ENCODE measurements at regions of chr14 and their contacts with region 1.

Region 1: DNA sequence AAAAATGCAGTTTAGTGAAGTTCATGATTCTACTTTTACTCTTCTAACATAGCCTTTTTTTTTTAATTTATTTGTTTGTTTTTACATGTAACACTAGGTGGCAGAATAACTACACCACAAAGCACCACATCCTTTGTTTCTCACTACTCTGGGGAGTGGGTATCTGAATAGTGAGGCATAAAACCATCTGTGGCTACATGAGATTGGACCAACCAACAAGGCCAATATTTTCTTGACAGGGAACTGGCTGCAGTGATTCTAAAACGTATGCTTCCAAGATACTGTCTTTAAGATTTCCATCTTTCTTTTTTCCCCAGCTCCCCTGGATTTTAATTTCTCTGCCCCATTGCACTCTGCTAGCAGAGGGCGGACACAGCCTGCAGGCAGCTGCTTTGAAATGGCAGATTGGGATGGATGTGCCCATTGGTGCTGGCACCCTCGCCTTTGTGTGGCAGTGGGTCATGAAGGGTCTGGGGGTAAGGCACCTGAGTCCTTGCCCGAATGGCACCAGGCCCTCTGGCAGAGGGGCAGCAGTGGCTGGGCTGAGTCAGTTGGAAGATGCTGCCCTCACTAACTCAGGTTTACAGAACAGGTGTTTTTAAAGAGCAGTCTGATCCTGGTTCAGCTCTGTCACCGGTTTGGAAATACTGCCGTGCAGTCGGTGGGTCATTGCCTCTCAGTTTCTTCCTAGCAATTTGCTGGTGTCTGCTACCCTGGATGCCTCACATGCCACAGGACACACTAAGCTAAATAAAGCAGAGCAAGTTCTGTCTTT is 429.1 kb downstream of the RAD51B start:
- DNase-seq: peak; percentile 33 to 48
- H3K4me3 ChIP-seq: no peak overlapping the region
- H3K27ac ChIP-seq: peak overlapping the region; percentile 93
- H3K4me1 ChIP-seq: peaks cover 66% of the 10 kb centered on the region
- H3K27me3 ChIP-seq: no peaks in the 10 kb centered on the region
- CTCF ChIP-seq: peak; percentile 90

Region 2: GRCh38 chr14:67943947-67944346 is 304.7 kb before region 1 on chr14:
- CTCF ChIA-PET with region 1: interaction called, 6 read pairs
- POLR2A ChIA-PET with region 1: no interaction called
- intact Hi-C with region 1: loop called (anchors 1 kb)
- DNase-seq: peak; percentile 54 to 67
- H3K4me3 ChIP-seq: no peak overlapping the region
- H3K27ac ChIP-seq: peak overlapping the region; percentile 37
- H3K4me1 ChIP-seq: peaks cover 43% of the 10 kb centered on the region
- H3K27me3 ChIP-seq: no peaks in the 10 kb centered on the region
- CTCF ChIP-seq: peak; percentile 91

Region 3: GRCh38 chr14:68268719-68269118 is 20.1 kb after region 1 on chr14:
- CTCF ChIA-PET with region 1: no interaction called
- POLR2A ChIA-PET with region 1: no interaction called
- intact Hi-C with region 1: no loop called
- DNase-seq: no peak
- H3K4me3 ChIP-seq: no peak overlapping the region
- H3K27ac ChIP-seq: no peak overlapping the region
- H3K4me1 ChIP-seq: no peaks in the 10 kb centered on the region
- H3K27me3 ChIP-seq: no peaks in the 10 kb centered on the region
- CTCF ChIP-seq: no peak

Region 4: GRCh38 chr14:68283378-68284123 is 34.9 kb after region 1 on chr14:
- CTCF ChIA-PET with region 1: no interaction called
- POLR2A ChIA-PET with region 1: no interaction called
- intact Hi-C with region 1: no loop called
- DNase-seq: no peak
- H3K4me3 ChIP-seq: no peak overlapping the region
- H3K27ac ChIP-seq: no peak overlapping the region
- H3K4me1 ChIP-seq: peaks cover 14% of the 10 kb centered on the region
- H3K27me3 ChIP-seq: no peaks in the 10 kb centered on the region
- CTCF ChIP-seq: no peak

Region 5: DNA sequence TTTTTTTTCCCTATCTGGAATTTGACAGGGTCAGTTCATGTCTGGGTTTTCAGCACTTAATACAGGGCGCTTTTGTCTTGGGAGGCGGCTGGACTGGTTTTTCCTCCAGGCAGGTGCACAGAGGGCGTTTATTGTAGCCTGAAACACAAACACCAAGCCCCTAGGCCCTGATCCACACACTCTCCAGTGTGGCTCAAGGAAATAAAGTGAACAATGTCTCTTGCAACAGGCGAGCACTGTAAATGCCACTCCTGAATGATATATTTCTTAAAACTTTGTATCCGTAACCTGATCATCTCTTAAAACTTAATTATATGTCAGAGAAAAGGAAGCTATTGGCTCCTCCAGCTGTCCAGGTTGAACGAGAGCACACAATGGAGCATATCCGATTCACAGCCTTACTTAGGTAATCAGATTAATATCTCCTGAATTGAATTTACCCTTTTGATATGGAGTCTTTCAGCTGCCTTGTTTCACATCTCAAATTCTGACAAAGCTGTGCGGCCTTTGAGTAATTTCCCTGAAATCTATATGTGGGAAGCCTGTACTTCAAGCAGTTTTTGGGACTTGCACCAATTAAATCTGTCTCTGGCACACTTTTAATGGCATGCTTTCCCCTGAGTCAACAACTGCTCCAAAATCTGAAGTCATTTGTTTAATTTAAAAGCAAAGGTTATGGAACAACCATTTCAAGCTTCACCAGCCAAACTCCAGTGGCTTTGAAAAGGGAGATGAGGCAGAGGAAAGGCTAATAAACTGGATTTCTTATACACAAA is 58.5 kb after region 1 on chr14:
- CTCF ChIA-PET with region 1: interaction called, 8 read pairs
- POLR2A ChIA-PET with region 1: no interaction called
- intact Hi-C with region 1: loop called (anchors 5 kb)
- DNase-seq: peak; percentile 73 to 99
- H3K4me3 ChIP-seq: peak overlapping the region; percentile 22; the same call in 1 of the 2 replicates
- H3K27ac ChIP-seq: peak overlapping the region; percentile 95
- H3K4me1 ChIP-seq: peaks cover 62% of the 10 kb centered on the region
- H3K27me3 ChIP-seq: no peaks in the 10 kb centered on the region
- CTCF ChIP-seq: no peak

Region 6: DNA sequence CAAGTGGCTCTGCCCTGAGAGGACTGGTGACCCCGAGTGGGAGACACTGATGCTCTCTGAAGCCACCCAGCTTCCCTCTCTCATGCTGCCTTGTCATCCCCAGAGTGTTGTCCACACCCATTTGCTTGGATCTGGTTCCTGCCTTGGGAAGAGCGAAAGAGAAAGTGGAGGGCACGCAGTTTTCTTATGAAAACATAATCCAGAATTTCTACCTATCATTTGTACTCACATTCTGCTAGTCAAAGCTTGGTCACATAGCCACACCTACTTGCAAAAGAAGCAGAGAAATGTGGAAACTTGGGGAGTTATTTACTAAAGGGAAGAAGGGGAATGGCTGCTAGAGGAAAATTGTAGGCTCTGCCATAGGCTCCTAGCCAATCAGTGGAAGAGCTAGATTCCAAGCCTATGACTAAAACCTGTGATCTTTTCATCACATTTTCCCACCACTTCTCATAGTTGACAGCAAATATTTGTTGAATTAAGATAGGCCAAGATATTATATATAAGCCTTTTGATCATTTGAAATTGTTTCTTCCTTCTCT is 217.9 kb after region 1 on chr14:
- CTCF ChIA-PET with region 1: no interaction called
- POLR2A ChIA-PET with region 1: no interaction called
- intact Hi-C with region 1: loop called (anchors 2 kb)
- DNase-seq: peak; percentile 65 to 100
- H3K4me3 ChIP-seq: peak overlapping the region; percentile 23; the same call in 1 of the 2 replicates
- H3K27ac ChIP-seq: peak overlapping the region; percentile 96
- H3K4me1 ChIP-seq: peaks cover 95% of the 10 kb centered on the region
- H3K27me3 ChIP-seq: no peaks in the 10 kb centered on the region
- CTCF ChIP-seq: no peak

Region 7: GRCh38 chr14:68548194-68549056 is 299.8 kb after region 1 on chr14:
- CTCF ChIA-PET with region 1: no interaction called
- POLR2A ChIA-PET with region 1: no interaction called
- intact Hi-C with region 1: loop called (anchors 1 kb)
- DNase-seq: peak; percentile 77 to 86
- H3K4me3 ChIP-seq: no peak overlapping the region
- H3K27ac ChIP-seq: peak overlapping the region; percentile 96
- H3K4me1 ChIP-seq: peaks cover 70% of the 10 kb centered on the region
- H3K27me3 ChIP-seq: no peaks in the 10 kb centered on the region
- CTCF ChIP-seq: no peak

Region 8: DNA sequence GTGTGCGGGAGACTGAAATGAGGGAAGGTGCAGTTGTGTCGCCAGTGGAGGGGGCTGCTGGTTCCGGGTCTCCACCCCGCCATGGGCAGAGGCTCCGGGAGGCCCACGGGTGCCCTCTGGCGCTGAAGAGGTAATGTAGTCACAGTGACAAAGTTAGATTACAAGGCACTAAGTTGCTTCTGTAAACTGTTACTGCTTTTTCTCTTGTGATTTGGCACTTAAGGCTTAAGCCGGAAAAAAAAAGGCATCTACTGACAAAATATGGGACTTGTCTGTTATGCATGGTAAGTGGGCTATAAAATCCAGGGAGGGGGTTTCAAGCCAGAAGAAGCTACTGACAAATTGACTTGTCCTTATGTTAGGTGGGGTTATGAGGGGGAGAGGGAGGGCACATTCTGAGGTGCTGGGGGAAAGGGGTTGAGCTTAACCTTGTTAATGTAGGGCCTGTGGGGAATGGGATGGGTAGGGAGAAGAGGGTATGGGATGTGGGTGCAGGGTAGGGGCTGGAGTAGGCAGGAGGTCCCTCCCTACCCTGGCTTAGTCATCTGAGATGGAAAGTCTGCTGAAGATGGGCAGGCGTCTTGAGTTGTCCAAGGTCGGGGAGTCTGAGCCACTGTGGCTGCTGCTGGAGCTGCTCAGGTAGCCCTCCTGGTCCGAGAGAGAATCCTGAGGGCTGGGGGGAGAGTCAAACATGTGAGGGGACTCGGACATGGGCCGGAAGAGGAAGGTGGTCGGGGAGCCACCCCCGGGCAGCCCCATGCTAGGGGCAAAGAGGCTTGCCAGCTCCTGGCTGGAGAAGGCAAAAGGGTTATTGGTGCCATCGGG is 540.5 kb after region 1 on chr14:
- CTCF ChIA-PET with region 1: no interaction called
- POLR2A ChIA-PET with region 1: interaction called, 15 read pairs
- intact Hi-C with region 1: loop called (anchors 1 kb)
- DNase-seq: peak; percentile 77 to 88
- H3K4me3 ChIP-seq: peak overlapping the region; percentile 95
- H3K27ac ChIP-seq: peak overlapping the region; percentile 98
- H3K4me1 ChIP-seq: peaks cover 45% of the 10 kb centered on the region
- H3K27me3 ChIP-seq: no peaks in the 10 kb centered on the region
- CTCF ChIP-seq: peak; percentile 80